ENCODE measurements at regions of chr2 and their contacts with region 1.

Region 1: DNA sequence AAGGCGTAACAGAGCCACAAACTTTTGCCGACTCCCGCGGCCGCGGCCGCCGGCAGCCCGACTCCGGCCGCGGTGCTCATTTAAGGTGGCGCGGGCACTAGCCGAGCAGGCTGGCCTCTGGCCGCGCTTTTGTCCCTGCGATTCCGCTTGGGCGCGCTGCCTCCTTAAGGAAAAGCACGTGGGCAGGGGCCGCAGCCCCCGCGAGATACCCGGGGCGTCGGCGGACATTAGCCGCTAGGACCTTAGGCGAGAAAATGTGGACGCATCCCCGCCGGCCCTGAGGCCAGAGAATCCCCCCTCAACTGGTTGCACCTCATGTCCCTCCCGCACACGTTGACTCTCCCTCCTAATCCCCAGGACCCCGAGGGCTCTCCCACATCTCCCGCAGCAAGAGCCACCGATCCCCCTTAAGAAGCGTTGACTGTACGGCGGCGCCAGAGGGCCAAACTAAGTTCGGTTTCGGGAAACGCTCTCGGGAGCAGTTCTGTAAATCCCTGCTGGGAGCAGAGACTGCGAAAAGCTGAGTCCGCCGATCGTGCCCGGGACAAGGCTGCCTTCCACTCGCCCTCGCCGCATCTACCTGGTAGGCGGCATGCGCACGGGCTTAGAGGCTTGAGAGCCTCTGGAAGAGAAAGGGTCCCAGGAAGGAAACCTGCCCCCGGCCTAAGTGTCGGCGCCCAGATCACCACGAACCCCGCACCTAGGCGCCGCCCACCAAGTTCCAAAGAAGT is 1.7 kb upstream of the SATB2 start:
- DNase-seq: peak; percentile 76 to 81
- H3K4me3 ChIP-seq: peak overlapping the region; percentile 69
- H3K27ac ChIP-seq: peak overlapping the region; percentile 78
- H3K4me1 ChIP-seq: peaks cover 24% of the 10 kb centered on the region
- H3K27me3 ChIP-seq: no peaks in the 10 kb centered on the region
- CTCF ChIP-seq: no peak

Region 2: GRCh38 chr2:199535445-199536177 is 76.2 kb after region 1 on chr2:
- CTCF ChIA-PET with region 1: no interaction called
- POLR2A ChIA-PET with region 1: no interaction called
- intact Hi-C with region 1: no loop called
- DNase-seq: no peak
- H3K4me3 ChIP-seq: no peak overlapping the region
- H3K27ac ChIP-seq: no peak overlapping the region
- H3K4me1 ChIP-seq: no peaks in the 10 kb centered on the region
- H3K27me3 ChIP-seq: peaks cover 23% of the 10 kb centered on the region; the same call in 1 of the 2 replicates
- CTCF ChIP-seq: no peak

Region 3: DNA sequence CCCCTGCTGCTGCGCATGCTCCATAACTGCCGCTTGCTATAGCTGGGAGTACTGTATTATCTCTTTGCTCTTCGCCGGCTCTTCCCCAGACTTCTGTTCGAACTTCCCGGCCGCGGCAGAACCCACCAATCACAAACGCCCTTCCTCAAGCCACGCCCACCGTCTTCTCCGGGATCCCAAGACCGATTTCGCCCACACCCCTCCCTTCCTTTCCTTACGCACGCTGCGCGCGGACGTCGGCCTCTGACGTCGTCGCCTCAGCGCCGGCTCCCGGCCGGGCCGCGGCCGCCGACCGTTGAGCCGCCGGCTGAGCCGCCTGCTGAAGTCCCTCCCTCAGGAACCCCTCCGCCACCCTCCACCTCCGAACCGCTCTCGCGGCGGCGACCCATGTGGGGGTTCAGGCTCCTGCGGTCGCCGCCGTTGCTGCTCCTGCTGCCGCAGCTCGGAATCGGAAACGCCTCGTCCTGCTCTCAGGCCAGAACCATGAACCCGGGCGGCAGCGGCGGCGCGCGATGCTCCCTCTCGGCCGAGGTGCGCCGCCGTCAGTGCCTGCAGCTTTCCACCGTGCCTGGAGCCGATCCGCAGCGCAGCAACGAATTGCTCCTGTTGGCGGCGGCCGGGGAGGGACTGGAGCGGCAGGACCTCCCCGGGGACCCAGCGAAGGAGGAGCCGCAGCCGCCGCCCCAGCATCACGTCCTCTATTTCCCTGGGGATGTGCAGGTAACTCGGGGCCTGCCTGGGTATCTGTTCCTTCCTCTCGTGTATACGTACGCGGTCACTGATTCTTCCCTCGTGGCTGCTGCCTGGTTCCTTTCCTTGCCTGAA is 451.8 kb after region 1 on chr2 and contains the start of gene C2orf69:
- CTCF ChIA-PET with region 1: no interaction called
- POLR2A ChIA-PET with region 1: interaction called, 3 read pairs
- intact Hi-C with region 1: loop called (anchors 10 kb)
- DNase-seq: peak; percentile 92 to 99
- H3K4me3 ChIP-seq: peak within 1 kb of the TSS; percentile 94
- H3K27ac ChIP-seq: peak within 1 kb of the TSS; percentile 79
- H3K4me1 ChIP-seq: peaks cover 28% of the 10 kb centered on the region
- H3K27me3 ChIP-seq: no peaks in the 10 kb centered on the region
- CTCF ChIP-seq: no peak
- total RNA-seq, gene C2orf69: 14.1 TPM in 2 replicates

Measured in PC-9 (cell line).